ENCODE measurements at regions of chrX and their contacts with region 1.

Region 1: DNA sequence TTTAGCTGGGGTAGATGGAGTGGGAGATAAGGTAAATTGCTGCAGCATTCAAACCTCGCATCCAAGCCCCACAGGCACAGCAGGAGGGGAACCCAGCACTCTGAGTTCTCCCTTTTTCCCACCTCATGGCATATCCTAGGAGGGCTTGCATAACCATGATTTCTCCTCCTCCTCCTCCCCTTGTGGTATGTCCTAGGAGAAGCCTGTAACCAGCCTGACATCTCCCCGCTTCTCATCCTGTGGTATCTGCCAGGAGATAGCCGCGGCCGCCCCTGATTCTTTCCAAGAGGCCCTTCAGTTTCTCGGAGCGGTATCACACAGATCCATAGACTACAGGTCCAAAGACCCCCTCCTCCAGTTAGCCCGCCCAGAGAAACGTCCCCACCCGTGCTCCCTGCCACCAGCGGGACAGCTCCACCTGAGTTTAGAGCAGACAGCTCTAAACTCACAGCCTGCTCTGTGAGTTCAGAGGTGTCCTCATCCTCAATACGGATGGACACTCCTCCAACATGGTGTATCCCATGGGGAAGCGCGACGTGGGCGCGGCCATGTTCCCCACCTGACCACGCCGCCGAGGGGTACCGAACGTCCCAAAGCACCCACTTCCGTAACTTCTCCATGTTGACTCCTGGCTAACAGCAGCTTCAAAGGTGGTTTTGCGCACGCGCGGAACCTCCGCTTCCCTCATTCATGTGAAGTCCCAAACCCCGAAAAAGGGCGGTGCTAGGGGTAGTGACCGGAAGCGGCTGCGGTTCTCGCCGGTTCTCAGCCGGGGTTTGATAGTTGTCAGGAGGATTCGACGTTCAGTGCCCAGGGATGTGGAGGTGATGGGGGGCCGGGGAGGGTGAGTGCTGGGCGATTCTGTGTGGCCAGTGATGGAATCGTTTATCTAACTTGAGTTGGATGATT is at the start of gene ZNF81:
- DNase-seq: peak; percentile 80 to 95 (median 91)
- ATAC-seq: peak; percentile 96
- H3K4me3 ChIP-seq: peak within 1 kb of the TSS; percentile 74 to 75
- H3K4me3 Mint-ChIP-seq: peak within 1 kb of the TSS; percentile 98
- H3K27ac ChIP-seq: peak within 1 kb of the TSS; percentile 65 to 75
- H3K27ac Mint-ChIP-seq: peak within 1 kb of the TSS; percentile 97
- H3K4me1 ChIP-seq: peaks cover 14% of the 10 kb centered on the region
- H3K4me1 Mint-ChIP-seq: peaks cover 27% of the 10 kb centered on the region
- H3K27me3 ChIP-seq: no peaks in the 10 kb centered on the region
- H3K27me3 Mint-ChIP-seq: no peaks in the 10 kb centered on the region
- CTCF ChIP-seq: no peak
- total RNA-seq, gene ZNF81: 6.1 to 7.2 TPM

Region 2: DNA sequence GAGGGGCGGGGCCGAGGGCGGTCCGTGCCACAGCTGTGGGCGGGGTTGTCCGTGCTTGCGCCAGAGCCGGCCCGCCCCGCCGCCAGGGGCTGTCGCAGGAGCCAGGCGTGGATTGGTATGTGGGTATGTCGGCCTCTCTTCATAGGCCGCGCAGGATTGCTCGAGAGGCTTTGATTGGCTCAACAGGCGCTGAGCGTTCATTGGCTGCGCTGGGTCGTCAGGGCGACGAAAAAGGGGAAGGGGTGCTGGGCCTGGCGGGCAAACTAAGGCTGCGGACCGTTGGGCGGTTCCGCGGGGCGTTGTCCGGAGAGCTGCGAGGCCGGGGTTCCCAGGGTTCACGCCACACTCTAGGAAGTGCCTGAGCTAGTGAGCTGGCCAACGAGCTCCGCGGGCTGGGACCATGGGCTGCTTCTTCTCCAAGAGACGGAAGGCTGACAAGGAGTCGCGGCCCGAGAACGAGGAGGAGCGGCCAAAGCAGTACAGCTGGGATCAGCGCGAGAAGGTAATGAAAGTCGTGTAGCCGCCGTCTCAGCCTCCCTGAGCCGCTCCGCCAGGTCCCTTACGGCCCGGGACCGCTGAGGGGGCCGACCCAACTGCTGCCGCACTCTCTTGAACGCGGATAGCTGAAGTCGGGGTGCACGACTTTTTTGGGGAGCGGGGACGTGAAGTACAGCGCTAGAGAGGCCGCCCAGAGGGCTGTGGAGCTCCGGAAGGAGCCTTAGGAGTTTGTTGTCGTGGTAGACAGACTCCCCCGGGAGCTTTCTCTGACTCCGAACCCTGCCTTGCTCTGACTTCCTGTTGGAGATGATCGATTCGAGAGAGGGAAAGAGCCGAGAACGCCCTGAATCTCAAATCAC is 999.5 kb before region 1 on chrX and contains the start of gene RP2:
- CTCF ChIA-PET with region 1: no interaction called
- POLR2A ChIA-PET with region 1: no interaction called
- intact Hi-C with region 1: loop called in 1 of 2 experiments (anchors 10 kb)
- DNase-seq: peak; percentile 61 to 92 (median 86)
- ATAC-seq: peak; percentile 95
- H3K4me3 ChIP-seq: peak within 1 kb of the TSS; percentile 95 to 96
- H3K4me3 Mint-ChIP-seq: peak within 1 kb of the TSS; percentile 97
- H3K27ac ChIP-seq: peak within 1 kb of the TSS; percentile 82 to 91
- H3K27ac Mint-ChIP-seq: peak within 1 kb of the TSS; percentile 95
- H3K4me1 ChIP-seq: peaks cover 15% of the 10 kb centered on the region
- H3K4me1 Mint-ChIP-seq: peaks cover 24% of the 10 kb centered on the region
- H3K27me3 ChIP-seq: no peaks in the 10 kb centered on the region
- H3K27me3 Mint-ChIP-seq: no peaks in the 10 kb centered on the region
- CTCF ChIP-seq: no peak
- total RNA-seq, gene RP2: 4.4 to 4.9 TPM

Region 3: GRCh38 chrX:47456080-47456479 is 380.3 kb before region 1 on chrX:
- CTCF ChIA-PET with region 1: no interaction called
- POLR2A ChIA-PET with region 1: no interaction called
- intact Hi-C with region 1: no loop called
- DNase-seq: no peak
- ATAC-seq: no peak
- H3K4me3 ChIP-seq: no peak overlapping the region
- H3K4me3 Mint-ChIP-seq: no peak overlapping the region
- H3K27ac ChIP-seq: no peak overlapping the region
- H3K27ac Mint-ChIP-seq: no peak overlapping the region
- H3K4me1 ChIP-seq: peaks cover 6% of the 10 kb centered on the region
- H3K4me1 Mint-ChIP-seq: peaks cover 10% of the 10 kb centered on the region
- H3K27me3 ChIP-seq: no peaks in the 10 kb centered on the region
- H3K27me3 Mint-ChIP-seq: no peaks in the 10 kb centered on the region
- CTCF ChIP-seq: no peak

Region 4: DNA sequence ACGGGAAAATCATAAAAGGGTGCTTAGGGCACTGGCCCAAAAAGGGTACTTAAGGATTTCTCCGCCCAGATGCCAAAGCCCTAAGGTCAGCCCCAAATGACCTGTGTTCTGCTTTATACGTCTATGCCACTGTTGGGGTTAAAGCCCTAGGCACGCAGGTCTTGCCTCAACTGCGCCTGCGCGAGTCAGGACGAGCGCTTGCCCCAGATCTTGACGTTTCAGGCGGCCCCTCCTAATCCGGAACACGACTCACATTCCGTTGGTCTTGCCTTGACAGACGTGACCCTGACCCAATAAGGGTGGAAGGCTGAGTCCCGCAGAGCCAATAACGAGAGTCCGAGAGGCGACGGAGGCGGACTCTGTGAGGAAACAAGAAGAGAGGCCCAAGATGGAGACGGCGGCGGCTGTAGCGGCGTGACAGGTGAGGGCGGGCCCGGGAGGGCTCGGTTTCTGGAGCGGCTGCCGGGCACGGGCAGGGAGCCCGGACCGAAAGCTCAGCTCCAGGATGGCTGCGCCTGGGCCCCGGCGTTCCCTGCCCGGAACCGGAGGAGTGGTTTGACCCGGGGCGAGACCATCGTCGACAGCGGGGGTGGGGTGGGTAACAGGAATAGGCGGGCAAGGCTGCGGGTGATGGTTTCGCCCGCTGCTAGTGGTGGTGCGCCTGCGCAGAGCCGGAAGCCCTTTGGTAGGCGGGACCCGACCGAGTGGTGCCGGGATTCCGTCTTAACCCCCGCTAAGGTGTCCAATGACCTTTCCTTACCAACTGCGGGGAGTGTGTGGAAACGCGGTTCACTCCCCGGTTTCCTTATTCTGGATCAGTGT is 275.4 kb before region 1 on chrX and contains the start of gene ARAF:
- CTCF ChIA-PET with region 1: no interaction called
- POLR2A ChIA-PET with region 1: no interaction called
- intact Hi-C with region 1: loop called in 1 of 2 experiments (anchors 5 kb)
- DNase-seq: peak; percentile 86 to 99 (median 94)
- ATAC-seq: peak; percentile 87
- H3K4me3 ChIP-seq: peak within 1 kb of the TSS; percentile 58 to 91
- H3K4me3 Mint-ChIP-seq: peak within 1 kb of the TSS; percentile 95
- H3K27ac ChIP-seq: peak within 1 kb of the TSS; percentile 98 to 99
- H3K27ac Mint-ChIP-seq: peak within 1 kb of the TSS; percentile 99
- H3K4me1 ChIP-seq: peaks cover 29% of the 10 kb centered on the region
- H3K4me1 Mint-ChIP-seq: peaks cover 46% of the 10 kb centered on the region
- H3K27me3 ChIP-seq: no peaks in the 10 kb centered on the region
- H3K27me3 Mint-ChIP-seq: no peaks in the 10 kb centered on the region
- CTCF ChIP-seq: no peak
- total RNA-seq, gene ARAF: 125 to 134 TPM

Region 5: GRCh38 chrX:47958761-47959342 is 122.4 kb after region 1 on chrX:
- CTCF ChIA-PET with region 1: interaction called, 4 read pairs
- POLR2A ChIA-PET with region 1: no interaction called
- intact Hi-C with region 1: loop called in 1 of 2 experiments (anchors 10 kb)
- DNase-seq: peak in 4 of 9 experiments; percentile 10 to 54 (median 26)
- ATAC-seq: peak; percentile 75
- H3K4me3 ChIP-seq: no peak overlapping the region
- H3K4me3 Mint-ChIP-seq: no peak overlapping the region
- H3K27ac ChIP-seq: no peak overlapping the region
- H3K27ac Mint-ChIP-seq: no peak overlapping the region
- H3K4me1 ChIP-seq: no peaks in the 10 kb centered on the region
- H3K4me1 Mint-ChIP-seq: no peaks in the 10 kb centered on the region
- H3K27me3 ChIP-seq: no peaks in the 10 kb centered on the region
- H3K27me3 Mint-ChIP-seq: no peaks in the 10 kb centered on the region
- CTCF ChIP-seq: peak; percentile 21

Region 6: DNA sequence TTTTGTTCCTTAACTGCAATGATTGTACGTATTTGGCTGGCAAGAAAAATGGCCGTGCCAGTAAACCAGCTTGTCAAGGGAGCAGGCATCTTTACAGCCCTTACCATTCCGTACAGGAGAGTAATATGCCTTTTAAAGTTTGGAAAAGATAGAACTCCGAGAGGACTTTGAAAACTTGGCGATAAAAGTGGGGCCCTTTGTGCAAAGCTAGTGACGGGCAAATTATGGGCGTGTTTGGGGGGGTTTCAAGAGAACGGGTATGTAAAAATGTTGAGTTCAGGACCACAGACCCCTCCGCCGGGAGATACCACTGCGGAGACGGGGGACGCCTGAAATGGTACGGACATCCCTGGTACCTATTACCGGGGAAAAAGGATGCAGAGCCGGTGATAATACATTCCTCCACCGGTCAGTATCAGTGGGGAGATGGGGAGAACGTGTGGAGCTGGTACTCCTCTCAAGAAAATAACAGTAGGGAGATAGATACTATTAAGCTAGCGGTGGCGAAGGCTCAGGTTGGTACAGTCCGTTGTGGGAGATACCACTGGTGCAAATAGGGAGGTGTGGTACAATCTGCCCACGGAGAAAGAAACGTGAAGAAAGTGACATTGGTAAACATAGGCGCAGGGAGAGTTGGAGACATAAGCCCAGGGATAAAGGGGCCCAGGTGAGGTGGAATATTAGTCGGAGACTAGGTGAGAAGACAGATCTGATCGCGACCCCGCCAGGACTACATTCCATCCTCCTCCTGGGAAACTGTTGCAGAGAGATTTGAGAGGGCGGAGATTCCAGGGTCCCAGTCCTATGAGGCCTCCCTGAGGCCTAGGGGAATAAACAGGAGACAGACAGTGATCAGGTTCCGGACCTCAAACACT is 184.8 kb after region 1 on chrX:
- CTCF ChIA-PET with region 1: interaction called, 57 read pairs
- POLR2A ChIA-PET with region 1: interaction called, 5 read pairs
- intact Hi-C with region 1: loop called (anchors 1 kb)
- DNase-seq: peak; percentile 51 to 89 (median 76)
- ATAC-seq: peak; percentile 64
- H3K4me3 ChIP-seq: peak overlapping the region; percentile 65 to 74
- H3K4me3 Mint-ChIP-seq: peak overlapping the region; percentile 95
- H3K27ac ChIP-seq: peak overlapping the region; percentile 73 to 95
- H3K27ac Mint-ChIP-seq: peak overlapping the region; percentile 98
- H3K4me1 ChIP-seq: peaks cover 3% of the 10 kb centered on the region
- H3K4me1 Mint-ChIP-seq: peaks cover 15% of the 10 kb centered on the region
- H3K27me3 ChIP-seq: no peaks in the 10 kb centered on the region
- H3K27me3 Mint-ChIP-seq: no peaks in the 10 kb centered on the region
- CTCF ChIP-seq: no peak

Region 7: DNA sequence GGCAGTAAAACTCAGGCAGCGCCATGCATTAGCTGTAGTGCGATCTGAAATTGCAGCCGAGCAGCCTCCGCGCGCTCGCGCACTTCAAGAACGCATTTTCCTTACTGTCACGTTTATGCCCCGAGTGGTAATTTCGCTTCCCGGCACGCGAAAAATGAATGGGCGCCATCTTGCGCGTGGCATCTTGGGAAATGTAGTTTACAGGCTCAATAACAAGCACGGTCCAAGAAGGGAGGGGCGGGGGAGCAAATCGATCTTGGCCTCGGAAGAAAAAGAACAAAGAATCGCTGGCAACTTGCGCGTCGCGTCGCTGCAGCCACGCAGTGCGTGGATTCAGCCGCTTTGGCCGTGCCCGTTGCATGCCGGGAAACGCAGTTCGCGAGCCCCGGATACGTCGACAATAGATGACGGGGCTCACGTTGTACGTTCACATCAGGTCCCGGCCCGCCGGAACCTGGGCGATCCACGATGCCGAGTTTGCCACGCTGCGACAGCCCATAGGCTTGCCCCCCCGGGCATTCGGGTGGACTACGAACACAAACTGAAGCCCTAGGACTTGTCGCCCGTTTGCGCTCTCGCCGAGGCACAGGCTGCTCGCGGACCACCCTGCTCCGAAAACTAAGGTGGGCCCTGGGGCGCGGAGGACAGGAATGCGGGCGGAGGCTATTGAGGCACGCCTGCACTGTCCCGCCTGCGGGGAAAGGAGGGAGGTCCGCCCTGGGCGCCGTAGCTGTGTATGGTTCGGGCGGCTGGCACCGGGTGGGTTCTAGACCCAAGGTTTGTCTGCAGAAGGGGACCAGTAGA is 639.6 kb after region 1 on chrX and contains the start of gene FTSJ1:
- CTCF ChIA-PET with region 1: no interaction called
- POLR2A ChIA-PET with region 1: no interaction called
- intact Hi-C with region 1: loop called (anchors 10 kb)
- DNase-seq: peak; percentile 75 to 96 (median 87)
- ATAC-seq: peak; percentile 89
- H3K4me3 ChIP-seq: peak within 1 kb of the TSS; percentile 62 to 86
- H3K4me3 Mint-ChIP-seq: peak within 1 kb of the TSS; percentile 88
- H3K27ac ChIP-seq: peak within 1 kb of the TSS; percentile 85 to 88
- H3K27ac Mint-ChIP-seq: peak within 1 kb of the TSS; percentile 90
- H3K4me1 ChIP-seq: peaks cover 14% of the 10 kb centered on the region
- H3K4me1 Mint-ChIP-seq: peaks cover 30% of the 10 kb centered on the region
- H3K27me3 ChIP-seq: no peaks in the 10 kb centered on the region
- H3K27me3 Mint-ChIP-seq: no peaks in the 10 kb centered on the region
- CTCF ChIP-seq: no peak
- total RNA-seq, gene FTSJ1: 61.4 to 67.4 TPM

Measured in CD8-positive, alpha-beta T cell (primary cell).